ENCODE measurements at regions of chr16 and their contacts with region 1.

Region 1: GRCh38 chr16:67480833-67481560 is at the start of gene ATP6V0D1:
- DNase-seq: peak; percentile 96 to 100 (median 99)
- ATAC-seq: peak; percentile 87
- H3K4me3 ChIP-seq: peak within 1 kb of the TSS; percentile 100
- H3K4me3 Mint-ChIP-seq: peak within 1 kb of the TSS; percentile 98
- H3K27ac ChIP-seq: peak within 1 kb of the TSS; percentile 98 to 100
- H3K27ac Mint-ChIP-seq: peak within 1 kb of the TSS; percentile 95
- H3K4me1 ChIP-seq: peaks cover 53% of the 10 kb centered on the region
- H3K4me1 Mint-ChIP-seq: peaks cover 54% of the 10 kb centered on the region
- H3K27me3 ChIP-seq: no peaks in the 10 kb centered on the region
- H3K27me3 Mint-ChIP-seq: no peaks in the 10 kb centered on the region
- CTCF ChIP-seq: peak; percentile 81
- total RNA-seq, gene ATP6V0D1: 39.4 to 41.7 TPM

Region 2: GRCh38 chr16:65601781-65602180 is 1879.2 kb before region 1 on chr16:
- CTCF ChIA-PET with region 1: no interaction called
- POLR2A ChIA-PET with region 1: no interaction called
- intact Hi-C with region 1: no loop called
- DNase-seq: no peak
- ATAC-seq: no peak
- H3K4me3 ChIP-seq: no peak overlapping the region
- H3K4me3 Mint-ChIP-seq: no peak overlapping the region
- H3K27ac ChIP-seq: no peak overlapping the region
- H3K27ac Mint-ChIP-seq: no peak overlapping the region
- H3K4me1 ChIP-seq: no peaks in the 10 kb centered on the region
- H3K4me1 Mint-ChIP-seq: no peaks in the 10 kb centered on the region
- H3K27me3 ChIP-seq: no peaks in the 10 kb centered on the region
- H3K27me3 Mint-ChIP-seq: no peaks in the 10 kb centered on the region
- CTCF ChIP-seq: no peak

Region 3: DNA sequence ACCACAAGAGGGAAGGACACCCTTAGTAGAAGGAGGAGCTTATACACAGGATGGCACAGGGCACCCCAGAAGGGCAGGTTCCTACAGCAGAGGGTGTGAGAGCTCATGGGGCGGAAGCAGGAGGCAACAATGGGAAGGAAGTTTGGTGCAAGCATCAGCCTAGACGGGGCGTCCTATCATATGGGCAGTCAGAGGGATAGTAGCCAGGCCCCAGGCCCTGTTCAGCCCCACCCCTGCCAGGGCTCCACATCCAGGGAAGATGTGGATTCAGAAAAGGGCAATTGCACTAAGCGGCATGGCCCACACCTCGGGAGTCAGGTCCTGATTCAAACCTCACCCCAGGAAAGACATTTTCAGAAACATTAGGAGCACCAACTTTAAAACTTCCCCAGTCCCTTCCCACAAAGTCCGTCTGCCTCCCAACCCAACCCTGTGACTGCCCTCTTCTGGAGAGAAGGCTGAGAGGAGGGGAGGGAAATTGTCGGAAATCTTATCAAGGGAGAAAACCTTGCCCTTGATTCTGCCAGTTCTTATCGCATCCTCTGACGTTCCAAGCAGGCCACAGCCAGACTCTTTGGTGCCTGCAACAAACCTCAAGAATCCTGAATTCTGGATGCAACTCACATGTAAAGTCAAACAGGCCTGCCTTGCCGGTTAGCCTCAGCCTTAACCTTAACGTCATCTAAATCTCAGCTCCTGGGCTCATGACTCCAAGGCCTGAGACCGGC is 1313.3 kb before region 1 on chr16:
- CTCF ChIA-PET with region 1: no interaction called
- POLR2A ChIA-PET with region 1: no interaction called
- intact Hi-C with region 1: no loop called
- DNase-seq: no peak
- ATAC-seq: no peak
- H3K4me3 ChIP-seq: no peak overlapping the region
- H3K4me3 Mint-ChIP-seq: no peak overlapping the region
- H3K27ac ChIP-seq: no peak overlapping the region
- H3K27ac Mint-ChIP-seq: no peak overlapping the region
- H3K4me1 ChIP-seq: no peaks in the 10 kb centered on the region
- H3K4me1 Mint-ChIP-seq: no peaks in the 10 kb centered on the region
- H3K27me3 ChIP-seq: no peaks in the 10 kb centered on the region
- H3K27me3 Mint-ChIP-seq: peaks cover 15% of the 10 kb centered on the region
- CTCF ChIP-seq: no peak

Region 4: DNA sequence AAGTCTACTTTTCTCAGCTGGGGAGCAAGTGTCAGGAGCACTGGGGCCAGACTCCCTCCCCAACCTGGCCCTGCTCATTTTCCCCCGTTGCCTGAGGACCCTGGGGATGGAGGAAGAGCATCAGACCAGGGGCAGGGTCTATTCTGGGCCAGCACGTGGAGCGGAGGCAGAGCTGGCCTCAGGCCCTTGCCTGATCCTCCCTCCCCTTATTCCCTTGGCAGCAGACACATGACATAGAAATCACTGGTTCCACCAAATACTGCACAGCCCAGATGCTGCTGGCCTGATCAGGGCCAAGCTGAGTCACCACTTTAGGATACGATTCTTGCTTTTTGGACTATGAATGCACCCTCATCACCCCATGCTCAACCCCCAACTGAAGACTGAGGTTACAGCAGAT is 18.1 kb after region 1 on chr16:
- CTCF ChIA-PET with region 1: interaction called, 16 read pairs
- POLR2A ChIA-PET with region 1: interaction called, 3 read pairs
- intact Hi-C with region 1: no loop called
- DNase-seq: no peak
- ATAC-seq: no peak
- H3K4me3 ChIP-seq: no peak overlapping the region
- H3K4me3 Mint-ChIP-seq: no peak overlapping the region
- H3K27ac ChIP-seq: no peak overlapping the region
- H3K27ac Mint-ChIP-seq: peak overlapping the region; percentile 32
- H3K4me1 ChIP-seq: peaks cover 14% of the 10 kb centered on the region
- H3K4me1 Mint-ChIP-seq: peaks cover 15% of the 10 kb centered on the region
- H3K27me3 ChIP-seq: no peaks in the 10 kb centered on the region
- H3K27me3 Mint-ChIP-seq: no peaks in the 10 kb centered on the region
- CTCF ChIP-seq: no peak

Region 5: DNA sequence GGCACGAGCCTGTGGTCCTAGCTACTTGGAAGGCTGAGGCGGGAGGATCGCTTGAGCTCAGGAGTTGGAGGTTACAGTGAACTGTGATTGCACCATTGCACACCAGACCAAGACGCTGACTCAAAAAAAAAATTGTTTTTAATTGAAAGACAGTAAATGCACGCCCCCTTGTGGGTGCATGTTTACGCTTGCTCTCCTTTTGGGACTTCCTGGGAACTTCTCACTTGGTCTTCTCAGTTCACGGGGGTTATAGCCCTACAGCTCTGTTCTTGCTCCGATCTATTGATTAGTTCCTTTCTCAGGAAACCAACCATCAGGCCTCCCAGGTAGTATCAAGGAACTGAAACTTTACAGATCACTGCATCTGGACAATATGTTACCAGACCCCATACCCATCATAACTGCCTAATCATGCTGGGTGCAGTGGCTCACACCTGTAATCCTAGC is 33.4 kb after region 1 on chr16:
- CTCF ChIA-PET with region 1: interaction called, 48 read pairs
- POLR2A ChIA-PET with region 1: interaction called, 10 read pairs
- intact Hi-C with region 1: loop called in 1 of 2 experiments (anchors 2 kb)
- DNase-seq: peak; percentile 69 to 92 (median 78)
- ATAC-seq: peak; percentile 95
- H3K4me3 ChIP-seq: no peak overlapping the region
- H3K4me3 Mint-ChIP-seq: no peak overlapping the region
- H3K27ac ChIP-seq: no peak overlapping the region
- H3K27ac Mint-ChIP-seq: no peak overlapping the region
- H3K4me1 ChIP-seq: peaks cover 22% of the 10 kb centered on the region
- H3K4me1 Mint-ChIP-seq: peaks cover 16% of the 10 kb centered on the region
- H3K27me3 ChIP-seq: no peaks in the 10 kb centered on the region
- H3K27me3 Mint-ChIP-seq: no peaks in the 10 kb centered on the region
- CTCF ChIP-seq: peak; percentile 78

Region 6: DNA sequence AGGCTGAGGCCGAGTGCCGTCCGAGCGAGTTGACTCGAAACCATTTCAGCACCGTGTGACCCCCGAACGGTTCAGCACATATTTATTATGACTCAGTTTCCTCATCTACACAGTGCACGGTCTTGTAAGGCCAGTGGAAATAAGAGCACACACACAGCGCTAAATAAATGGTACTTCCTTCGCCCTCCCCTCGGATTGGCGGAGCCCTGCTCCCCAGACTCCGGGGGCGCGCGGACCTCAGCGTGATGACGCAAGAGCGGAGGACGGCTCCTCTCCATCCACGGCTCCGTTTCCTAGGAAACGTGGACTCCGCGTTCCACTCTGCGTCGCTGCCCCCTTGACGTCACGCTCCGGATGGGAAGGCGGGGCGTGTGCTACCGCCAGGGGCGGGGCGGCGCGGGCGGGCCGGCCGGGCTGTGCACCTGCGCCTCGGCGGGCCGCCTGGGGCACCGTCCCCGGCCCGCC is 179.6 kb after region 1 on chr16 and contains the start of gene PARD6A:
- CTCF ChIA-PET with region 1: interaction called, 13 read pairs
- POLR2A ChIA-PET with region 1: interaction called, 10 read pairs
- intact Hi-C with region 1: loop called in 1 of 2 experiments (anchors 5 kb)
- DNase-seq: peak; percentile 86 to 99 (median 93)
- ATAC-seq: peak; percentile 76
- H3K4me3 ChIP-seq: peak within 1 kb of the TSS; percentile 95
- H3K4me3 Mint-ChIP-seq: peak within 1 kb of the TSS; percentile 95
- H3K27ac ChIP-seq: peak within 1 kb of the TSS; percentile 93 to 99
- H3K27ac Mint-ChIP-seq: peak within 1 kb of the TSS; percentile 94
- H3K4me1 ChIP-seq: peaks cover 38% of the 10 kb centered on the region
- H3K4me1 Mint-ChIP-seq: peaks cover 37% of the 10 kb centered on the region
- H3K27me3 ChIP-seq: no peaks in the 10 kb centered on the region
- H3K27me3 Mint-ChIP-seq: no peaks in the 10 kb centered on the region
- CTCF ChIP-seq: no peak
- total RNA-seq, gene PARD6A: 4.5 to 4.7 TPM

Region 7: DNA sequence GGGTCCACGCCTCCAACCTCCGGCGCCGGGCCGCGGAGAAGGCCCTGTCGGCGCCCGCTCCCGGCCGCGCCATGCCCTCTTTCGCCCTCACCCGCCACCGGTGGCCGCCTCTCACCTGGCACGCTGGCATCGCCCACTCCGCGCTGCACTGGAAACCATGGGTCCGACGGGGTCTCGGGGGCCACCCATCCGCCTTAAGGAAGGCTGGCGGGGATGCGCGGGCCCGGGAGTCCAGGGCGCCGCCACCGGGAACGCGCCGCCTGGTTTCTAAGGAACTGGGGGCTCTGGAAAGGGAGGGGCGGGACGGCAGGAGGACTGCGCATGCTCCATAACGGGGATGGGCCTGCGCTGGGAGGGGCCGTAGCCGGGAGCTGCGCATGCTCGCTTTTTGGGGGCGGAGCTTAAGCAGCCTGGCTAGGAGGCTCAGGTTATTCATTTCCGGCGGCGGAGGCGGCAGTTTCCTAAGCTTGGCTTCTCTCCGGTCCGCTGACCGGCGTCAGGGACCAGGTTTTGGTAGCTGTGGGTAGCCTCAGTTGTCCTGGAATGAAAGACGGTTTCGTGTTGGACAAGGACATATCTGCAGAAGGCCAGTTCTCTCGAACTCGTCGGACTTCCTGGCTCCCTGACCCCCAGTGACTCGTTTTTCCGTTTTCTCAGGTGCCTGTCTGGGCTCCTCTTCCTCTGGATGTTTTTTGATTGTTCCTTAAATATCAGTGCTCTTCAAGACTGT is 238.2 kb after region 1 on chr16 and contains the start of gene GFOD2:
- CTCF ChIA-PET with region 1: interaction called, 4 read pairs
- POLR2A ChIA-PET with region 1: interaction called, 5 read pairs
- intact Hi-C with region 1: loop called in 1 of 2 experiments (anchors 2 kb)
- DNase-seq: peak; percentile 96 to 100 (median 98)
- ATAC-seq: peak; percentile 94
- H3K4me3 ChIP-seq: peak within 1 kb of the TSS; percentile 76
- H3K4me3 Mint-ChIP-seq: peak within 1 kb of the TSS; percentile 97
- H3K27ac ChIP-seq: peak within 1 kb of the TSS; percentile 81 to 93
- H3K27ac Mint-ChIP-seq: peak within 1 kb of the TSS; percentile 93
- H3K4me1 ChIP-seq: peaks cover 26% of the 10 kb centered on the region
- H3K4me1 Mint-ChIP-seq: peaks cover 42% of the 10 kb centered on the region
- H3K27me3 ChIP-seq: no peaks in the 10 kb centered on the region
- H3K27me3 Mint-ChIP-seq: no peaks in the 10 kb centered on the region
- CTCF ChIP-seq: no peak
- total RNA-seq, gene GFOD2: 2.8 to 3.7 TPM

Region 8: DNA sequence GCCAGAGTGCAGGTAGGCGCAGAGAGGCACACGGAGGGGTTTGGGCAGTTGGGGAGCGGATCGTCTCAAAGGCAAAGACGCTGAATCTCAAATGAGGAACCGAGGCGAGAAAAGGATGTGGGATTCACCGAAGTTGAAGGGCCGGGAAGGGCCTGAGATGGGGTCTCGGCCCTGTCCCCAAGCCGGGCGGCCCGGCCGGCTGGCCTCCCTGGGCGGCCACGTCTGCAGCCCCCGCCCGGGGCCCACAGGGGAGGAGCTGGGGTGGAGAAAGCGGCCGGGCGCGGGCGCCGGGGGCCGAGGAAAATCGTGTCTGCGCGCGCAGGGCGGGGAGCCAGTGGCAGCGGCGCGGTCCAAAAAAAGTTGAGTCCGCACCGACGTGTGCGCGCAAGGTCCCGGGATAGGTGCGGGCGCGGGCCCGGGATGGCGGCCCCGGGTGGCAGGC is 487.0 kb after region 1 on chr16:
- CTCF ChIA-PET with region 1: no interaction called
- POLR2A ChIA-PET with region 1: no interaction called
- intact Hi-C with region 1: no loop called
- DNase-seq: peak in 5 of 14 experiments; percentile 12 to 58 (median 40)
- ATAC-seq: peak; percentile 13
- H3K4me3 ChIP-seq: peak overlapping the region; percentile 66
- H3K4me3 Mint-ChIP-seq: peak overlapping the region; percentile 98
- H3K27ac ChIP-seq: no peak overlapping the region
- H3K27ac Mint-ChIP-seq: peak overlapping the region; percentile 83
- H3K4me1 ChIP-seq: peaks cover 25% of the 10 kb centered on the region
- H3K4me1 Mint-ChIP-seq: peaks cover 24% of the 10 kb centered on the region
- H3K27me3 ChIP-seq: no peaks in the 10 kb centered on the region
- H3K27me3 Mint-ChIP-seq: no peaks in the 10 kb centered on the region
- CTCF ChIP-seq: no peak

Measured in CD4-positive, alpha-beta T cell (primary cell).